K562 (cell line): ENCODE measurements at regions of chr10 and their contacts with region 1.

Region 1: GRCh38 chr10:3785257-3785850 is 345 bp upstream of the KLF6 start:
- DNase-seq: peak; percentile 99 to 100 (median 100)
- ATAC-seq: peak; percentile 84
- H3K4me3 ChIP-seq: peak overlapping the region; percentile 92
- H3K27ac ChIP-seq: peak overlapping the region; percentile 97
- H3K4me1 ChIP-seq: peaks cover 20 to 34% of the 10 kb centered on the region in 2 experiments; a peak in 4 of 5 replicates
- H3K27me3 ChIP-seq: no peaks in the 10 kb centered on the region
- CTCF ChIP-seq: no peak
- EP300 ChIP-seq: peak; percentile 14; the same call in 1 of the 2 replicates
- POLR2A ChIP-seq: peak; percentile 88
- RAD21 ChIP-seq: peak in 1 of 2 experiments; percentile 6; a peak in 2 of 4 replicates

Region 2: GRCh38 chr10:3805791-3806461 is 20.6 kb after region 1 on chr10:
- CTCF ChIA-PET with region 1: no interaction called
- POLR2A ChIA-PET with region 1: interaction called, 33 read pairs
- in situ Hi-C with region 1: no loop called
- intact Hi-C with region 1: loop called (anchors 1 kb)
- DNase-seq: peak; percentile 63 to 79 (median 68)
- ATAC-seq: peak; percentile 2
- H3K4me3 ChIP-seq: no peak overlapping the region
- H3K27ac ChIP-seq: peak overlapping the region; percentile 95
- H3K4me1 ChIP-seq: peaks cover 50 to 80% of the 10 kb centered on the region in 2 experiments
- H3K27me3 ChIP-seq: no peaks in the 10 kb centered on the region; a peak in 1 of 5 replicates
- CTCF ChIP-seq: no peak
- EP300 ChIP-seq: peak; percentile 71
- POLR2A ChIP-seq: peak; percentile 18; the same call in 1 of the 2 replicates
- RAD21 ChIP-seq: peak in 1 of 2 experiments; percentile 14; a peak in 1 of 4 replicates

Region 3: DNA sequence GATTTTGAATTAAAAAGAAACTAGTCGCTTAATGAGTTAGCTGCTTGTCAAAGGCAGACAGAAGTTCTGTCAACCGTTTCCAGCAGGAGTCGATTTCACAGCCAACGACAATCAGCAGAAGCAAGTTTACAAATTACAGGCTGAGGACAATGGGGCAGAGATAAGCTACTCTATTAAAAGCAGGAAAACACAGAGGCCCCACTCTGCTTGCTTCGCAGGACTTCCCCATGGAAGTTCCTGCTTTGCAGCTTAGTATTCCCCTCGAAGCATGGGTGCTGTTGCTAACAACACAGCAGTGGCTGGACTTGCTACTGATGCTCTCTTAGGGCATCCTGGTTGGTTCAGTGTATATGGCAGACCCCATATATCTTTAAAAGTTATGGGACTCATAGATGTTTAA is 50.4 kb after region 1 on chr10:
- CTCF ChIA-PET with region 1: no interaction called
- POLR2A ChIA-PET with region 1: interaction called, 12 read pairs
- in situ Hi-C with region 1: no loop called
- intact Hi-C with region 1: no loop called
- DNase-seq: peak in 2 of 4 experiments; percentile 49 to 68
- ATAC-seq: peak; percentile 60
- H3K4me3 ChIP-seq: no peak overlapping the region
- H3K27ac ChIP-seq: peak overlapping the region; percentile 37; the same call in 1 of the 3 replicates
- H3K4me1 ChIP-seq: peaks cover 0 to 28% of the 10 kb centered on the region in 2 experiments; a peak in 4 of 5 replicates
- H3K27me3 ChIP-seq: no peaks in the 10 kb centered on the region
- CTCF ChIP-seq: no peak
- EP300 ChIP-seq: no peak; the same call in 1 of the 2 replicates
- POLR2A ChIP-seq: no peak
- RAD21 ChIP-seq: peak; percentile 8 to 25; a peak in 2 of 4 replicates

Region 4: GRCh38 chr10:3889961-3890522 is 104.7 kb after region 1 on chr10:
- CTCF ChIA-PET with region 1: no interaction called
- POLR2A ChIA-PET with region 1: interaction called, 13 read pairs
- in situ Hi-C with region 1: no loop called
- intact Hi-C with region 1: no loop called
- DNase-seq: no peak
- ATAC-seq: no peak
- H3K4me3 ChIP-seq: no peak overlapping the region
- H3K27ac ChIP-seq: peak overlapping the region; percentile 56; the same call in 1 of the 3 replicates
- H3K4me1 ChIP-seq: peaks cover 10 to 47% of the 10 kb centered on the region in 2 experiments; a peak in 4 of 5 replicates
- H3K27me3 ChIP-seq: no peaks in the 10 kb centered on the region
- CTCF ChIP-seq: no peak
- EP300 ChIP-seq: no peak
- POLR2A ChIP-seq: no peak
- RAD21 ChIP-seq: no peak

Region 5: DNA sequence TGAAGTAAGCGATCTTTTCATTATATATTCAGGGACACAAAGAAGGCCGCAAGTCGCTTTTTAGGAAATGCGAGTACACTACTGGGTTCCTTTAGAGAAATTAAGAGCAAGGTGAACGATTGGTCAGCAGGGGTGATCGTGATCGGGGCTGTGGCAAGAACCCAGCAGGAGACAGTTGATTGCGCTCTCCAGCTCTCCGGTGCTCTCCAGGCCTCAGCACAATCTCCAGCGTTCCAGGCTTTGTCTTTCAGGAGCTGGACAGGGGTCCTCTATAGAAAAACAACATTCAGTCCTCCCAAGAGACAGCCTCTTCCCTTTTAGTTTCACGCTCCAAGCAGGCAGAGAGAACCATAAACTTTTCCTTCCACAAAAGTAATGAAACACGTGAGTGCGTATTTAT is 170.1 kb after region 1 on chr10:
- CTCF ChIA-PET with region 1: no interaction called
- POLR2A ChIA-PET with region 1: interaction called, 15 read pairs
- in situ Hi-C with region 1: no loop called
- intact Hi-C with region 1: no loop called
- DNase-seq: peak in 2 of 4 experiments; percentile 32
- ATAC-seq: peak; percentile 86
- H3K4me3 ChIP-seq: no peak overlapping the region
- H3K27ac ChIP-seq: no peak overlapping the region
- H3K4me1 ChIP-seq: peaks cover 0 to 3% of the 10 kb centered on the region in 2 experiments; a peak in 1 of 5 replicates
- H3K27me3 ChIP-seq: peaks cover 9 to 13% of the 10 kb centered on the region in 2 experiments; a peak in 3 of 5 replicates
- CTCF ChIP-seq: no peak
- EP300 ChIP-seq: no peak
- POLR2A ChIP-seq: no peak
- RAD21 ChIP-seq: no peak